Common myeloid progenitor, CD34-positive (primary cell): ENCODE measurements at regions of chr21 and their contacts with region 1.

Region 1: GRCh38 chr21:41425954-41426675 is at the start of gene MX1:
- DNase-seq: peak; percentile 73 to 90 (median 89)
- H3K4me3 ChIP-seq: peak within 1 kb of the TSS; percentile 50 to 88 (median 78)
- H3K27ac ChIP-seq: peak within 1 kb of the TSS in 1 of 2 experiments; percentile 63
- H3K4me1 ChIP-seq: peaks cover 0 to 14% (median 9%) of the 10 kb centered on the region in 4 experiments
- H3K27me3 ChIP-seq: peaks cover 0 to 3% (median 0%) of the 10 kb centered on the region in 5 experiments

Region 2: GRCh38 chr21:41235201-41235985 is 190.7 kb before region 1 on chr21:
- CTCF ChIA-PET with region 1: no interaction called
- POLR2A ChIA-PET with region 1: no interaction called
- DNase-seq: no peak
- H3K4me3 ChIP-seq: no peak overlapping the region
- H3K27ac ChIP-seq: no peak overlapping the region
- H3K4me1 ChIP-seq: no peaks in the 10 kb centered on the region
- H3K27me3 ChIP-seq: no peaks in the 10 kb centered on the region

Region 3: DNA sequence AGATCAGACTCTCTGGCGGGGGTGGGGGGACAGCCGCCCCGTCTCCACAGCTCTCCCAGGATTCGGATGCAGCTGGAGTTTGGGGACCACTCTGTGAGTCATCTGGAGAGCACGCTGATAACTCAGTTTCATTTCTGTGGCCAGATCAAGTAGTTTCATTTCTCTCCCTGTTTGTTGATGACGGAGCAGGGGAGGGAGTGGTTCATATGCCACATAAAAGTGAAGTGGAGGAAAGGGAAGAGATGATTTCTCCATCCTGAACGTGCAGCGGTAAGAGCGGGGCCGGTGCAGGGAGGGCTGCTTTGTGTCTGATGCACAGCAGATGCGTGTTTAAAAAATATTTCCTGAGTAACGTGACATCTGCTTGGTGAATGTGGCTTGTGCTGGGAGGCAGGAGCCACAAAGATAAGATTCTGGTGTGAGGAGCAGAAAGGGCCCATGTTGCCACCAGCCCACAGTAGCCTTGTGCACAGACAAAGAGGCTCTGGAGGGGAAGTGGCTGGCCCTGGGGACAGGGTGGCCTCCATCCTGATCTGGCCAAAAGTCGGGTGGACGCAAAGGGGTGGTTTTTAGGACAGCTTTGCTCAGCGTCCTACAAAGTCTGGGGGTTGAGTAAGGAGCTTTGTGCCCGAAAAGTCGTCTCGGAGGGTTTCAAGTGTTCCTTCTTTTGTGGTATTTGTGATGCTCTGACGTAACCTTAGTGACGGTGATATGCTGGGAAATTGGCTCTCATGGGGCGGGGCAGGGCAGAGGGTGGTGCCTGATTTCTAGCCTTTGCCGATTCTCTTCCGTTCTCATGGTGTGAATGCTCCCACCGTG is 64.1 kb before region 1 on chr21 and contains the start of gene MX2:
- CTCF ChIA-PET with region 1: no interaction called
- POLR2A ChIA-PET with region 1: interaction called, 11 read pairs
- DNase-seq: peak; percentile 97 to 99 (median 98)
- H3K4me3 ChIP-seq: peak within 1 kb of the TSS in 6 of 7 experiments; percentile 44 to 73 (median 56)
- H3K27ac ChIP-seq: peak within 1 kb of the TSS; percentile 85 to 93
- H3K4me1 ChIP-seq: peaks cover 2 to 27% (median 22%) of the 10 kb centered on the region in 4 experiments
- H3K27me3 ChIP-seq: no peaks in the 10 kb centered on the region